BJ (cell line): ENCODE measurements at regions of chr4 and their contacts with region 1.

Region 1: GRCh38 chr4:183261953-183262775 is 57.9 kb downstream of the CLDN22 start:
- DNase-seq: no peak
- H3K4me3 ChIP-seq: no peak overlapping the region
- H3K27me3 ChIP-seq: no peaks in the 10 kb centered on the region
- CTCF ChIP-seq: peak; percentile 85

Region 2: GRCh38 chr4:182929296-182929945 is 332.7 kb before region 1 on chr4:
- CTCF ChIA-PET with region 1: interaction called, 17 read pairs
- POLR2A ChIA-PET with region 1: no interaction called
- DNase-seq: peak; percentile 92
- H3K4me3 ChIP-seq: no peak overlapping the region
- H3K27me3 ChIP-seq: no peaks in the 10 kb centered on the region
- CTCF ChIP-seq: no peak

Region 3: DNA sequence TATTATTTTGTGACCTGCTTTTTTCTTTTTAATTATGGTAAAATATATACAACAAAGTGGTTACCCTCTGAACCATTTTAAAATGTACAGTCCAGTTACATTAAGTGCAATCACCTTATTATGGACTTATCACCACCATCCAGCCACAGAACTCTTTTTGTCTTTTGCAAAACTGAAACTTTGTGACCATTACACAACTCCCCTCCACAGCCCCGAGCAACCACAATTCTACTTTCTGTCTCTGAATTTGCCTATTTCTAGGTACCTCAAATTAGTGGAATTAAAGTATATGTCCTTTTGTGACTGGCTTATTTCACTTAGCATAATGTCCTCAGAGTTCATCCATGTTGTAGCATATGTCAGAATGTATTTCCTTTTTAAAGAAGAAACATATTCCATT is 202.4 kb before region 1 on chr4:
- CTCF ChIA-PET with region 1: interaction called, 10 read pairs
- POLR2A ChIA-PET with region 1: no interaction called
- DNase-seq: no peak
- H3K4me3 ChIP-seq: no peak overlapping the region
- H3K27me3 ChIP-seq: no peaks in the 10 kb centered on the region
- CTCF ChIP-seq: no peak

Region 4: GRCh38 chr4:183098723-183099536 is 163.2 kb before region 1 on chr4 and contains the start of gene WWC2:
- CTCF ChIA-PET with region 1: interaction called, 19 read pairs
- POLR2A ChIA-PET with region 1: no interaction called
- DNase-seq: peak; percentile 55
- H3K4me3 ChIP-seq: peak within 1 kb of the TSS; percentile 95
- H3K27me3 ChIP-seq: no peaks in the 10 kb centered on the region
- CTCF ChIP-seq: no peak
- polyA plus RNA-seq, gene WWC2: 32.0 and 36.8 TPM in 2 replicates

Region 5: DNA sequence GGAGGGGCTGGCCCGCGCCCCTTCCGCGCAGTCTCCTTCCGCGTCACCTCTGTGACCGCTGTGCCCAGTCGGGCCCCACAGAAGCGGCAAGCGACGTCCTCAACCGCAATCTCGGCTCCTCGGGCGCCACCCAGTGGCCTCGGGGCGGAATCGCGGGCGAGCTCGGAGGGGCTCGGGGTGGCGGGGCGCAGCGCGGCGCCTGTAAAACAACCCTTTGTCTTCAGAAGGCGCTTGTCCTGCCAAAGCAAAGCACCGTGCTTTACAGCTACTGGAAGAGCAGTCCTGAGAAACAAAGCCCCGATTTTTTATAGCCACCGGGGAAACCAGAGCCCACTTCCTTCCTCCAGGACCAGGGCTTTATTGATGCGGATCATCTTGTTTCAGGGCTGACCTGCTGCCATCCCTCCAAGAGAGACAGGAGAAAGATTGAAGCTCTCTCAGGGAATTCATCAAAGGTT is 145.0 kb after region 1 on chr4:
- CTCF ChIA-PET with region 1: interaction called, 11 read pairs
- POLR2A ChIA-PET with region 1: no interaction called
- DNase-seq: no peak
- H3K4me3 ChIP-seq: peak overlapping the region; percentile 39
- H3K27me3 ChIP-seq: no peaks in the 10 kb centered on the region
- CTCF ChIP-seq: peak; percentile 85